Thyroid gland (tissue), 4 donors: ENCODE measurements at regions of chr5 and their contacts with region 1.

Region 1: GRCh38 chr5:149990518-149991376 is 9.7 kb downstream of the TIGD6 start:
- DNase-seq: peak; percentile 83 to 86
- H3K4me3 ChIP-seq: no peak overlapping the region
- H3K27ac ChIP-seq: no peak overlapping the region
- H3K4me1 ChIP-seq: peaks cover 14 to 17% of the 10 kb centered on the region in 2 donors
- H3K27me3 ChIP-seq: no peaks in the 10 kb centered on the region
- CTCF ChIP-seq: peak; percentile 80 to 96 (median 93)
- POLR2A ChIP-seq: no peak

Region 2: DNA sequence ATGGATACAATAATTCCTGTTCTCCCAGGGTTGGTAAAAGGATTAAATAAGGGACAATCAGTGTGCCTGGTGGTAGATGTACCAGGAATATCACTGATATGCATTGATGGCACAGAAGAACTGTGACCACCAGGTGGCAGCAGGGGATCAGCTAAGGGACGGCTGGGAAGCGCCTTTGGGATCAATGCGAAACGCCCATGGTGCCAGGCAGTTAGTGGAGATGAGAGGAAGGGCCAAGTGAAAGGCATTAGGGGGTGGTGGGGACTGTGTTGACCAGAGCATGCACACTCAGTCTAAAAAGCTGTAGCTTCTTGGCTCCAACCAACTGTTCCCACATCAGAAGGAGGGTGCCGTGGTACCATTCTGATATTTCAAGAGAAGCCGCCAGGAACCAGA is 353.9 kb before region 1 on chr5:
- intact Hi-C with region 1: loop called (anchors 10 kb)
- DNase-seq: peak; percentile 22 to 79
- H3K4me3 ChIP-seq: no peak overlapping the region
- H3K27ac ChIP-seq: no peak overlapping the region
- H3K4me1 ChIP-seq: peaks cover 0 to 10% of the 10 kb centered on the region in 2 donors
- H3K27me3 ChIP-seq: no peaks in the 10 kb centered on the region
- CTCF ChIP-seq: peak; percentile 35 to 94 (median 66)
- POLR2A ChIP-seq: no peak

Region 3: GRCh38 chr5:149834246-149834855 is 156.4 kb before region 1 on chr5:
- intact Hi-C with region 1: loop called (anchors 5 kb)
- DNase-seq: peak; percentile 61 to 67
- H3K4me3 ChIP-seq: no peak overlapping the region
- H3K27ac ChIP-seq: no peak overlapping the region
- H3K4me1 ChIP-seq: no peaks in the 10 kb centered on the region
- H3K27me3 ChIP-seq: no peaks in the 10 kb centered on the region
- CTCF ChIP-seq: peak in 4 of 6 experiments; percentile 46 to 69 (median 67)
- POLR2A ChIP-seq: no peak

Region 4: DNA sequence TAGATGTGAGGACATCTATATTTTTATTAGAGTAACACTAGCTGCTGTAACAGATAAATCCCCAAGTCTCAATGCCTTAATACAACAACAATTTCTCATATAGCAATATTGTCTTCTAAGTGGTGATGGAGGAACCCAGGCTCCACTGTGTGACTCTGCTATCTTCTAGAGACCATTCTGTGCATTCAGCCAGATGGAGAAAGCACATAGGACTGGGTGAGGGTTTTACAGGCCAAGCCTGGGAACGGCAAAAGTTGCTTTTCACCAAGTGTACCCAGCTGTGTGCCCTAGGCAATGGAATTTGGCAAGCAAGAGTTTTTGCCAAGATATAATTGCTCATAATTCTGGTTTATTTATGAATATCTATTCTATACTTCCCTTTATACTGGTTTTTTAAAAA is 698.4 kb after region 1 on chr5:
- intact Hi-C with region 1: no loop called
- DNase-seq: no peak
- H3K4me3 ChIP-seq: no peak overlapping the region
- H3K27ac ChIP-seq: no peak overlapping the region
- H3K4me1 ChIP-seq: no peaks in the 10 kb centered on the region
- H3K27me3 ChIP-seq: no peaks in the 10 kb centered on the region
- CTCF ChIP-seq: no peak
- POLR2A ChIP-seq: no peak